Activated CD8-positive, alpha-beta T cell treated with anti-CD3 and anti-CD28 coated beads for 36 hours (primary cell): ENCODE measurements at regions of chr3 and their contacts with region 1.

Region 1: GRCh38 chr3:16884084-16884747 is 539 bp upstream of the PLCL2 start:
- DNase-seq: peak; percentile 82
- ATAC-seq: peak; percentile 62
- H3K4me3 Mint-ChIP-seq: peak overlapping the region; percentile 83
- H3K27ac Mint-ChIP-seq: peak overlapping the region; percentile 95
- H3K4me1 Mint-ChIP-seq: peaks cover 20% of the 10 kb centered on the region
- H3K27me3 Mint-ChIP-seq: no peaks in the 10 kb centered on the region
- CTCF ChIP-seq: peak; percentile 76

Region 2: GRCh38 chr3:16728781-16729745 is 155.2 kb before region 1 on chr3:
- CTCF ChIA-PET with region 1: no interaction called
- POLR2A ChIA-PET with region 1: no interaction called
- intact Hi-C with region 1: no loop called
- DNase-seq: no peak
- ATAC-seq: no peak
- H3K4me3 Mint-ChIP-seq: no peak overlapping the region
- H3K27ac Mint-ChIP-seq: no peak overlapping the region
- H3K4me1 Mint-ChIP-seq: no peaks in the 10 kb centered on the region
- H3K27me3 Mint-ChIP-seq: no peaks in the 10 kb centered on the region
- CTCF ChIP-seq: no peak

Region 3: GRCh38 chr3:16849229-16849628 is 35.0 kb before region 1 on chr3:
- CTCF ChIA-PET with region 1: interaction called, 11 read pairs
- POLR2A ChIA-PET with region 1: interaction called, 3 read pairs
- intact Hi-C with region 1: loop called (anchors 5 kb)
- DNase-seq: peak; percentile 87
- ATAC-seq: peak; percentile 85
- H3K4me3 Mint-ChIP-seq: peak overlapping the region; percentile 65
- H3K27ac Mint-ChIP-seq: peak overlapping the region; percentile 75
- H3K4me1 Mint-ChIP-seq: peaks cover 44% of the 10 kb centered on the region
- H3K27me3 Mint-ChIP-seq: no peaks in the 10 kb centered on the region
- CTCF ChIP-seq: no peak

Region 4: DNA sequence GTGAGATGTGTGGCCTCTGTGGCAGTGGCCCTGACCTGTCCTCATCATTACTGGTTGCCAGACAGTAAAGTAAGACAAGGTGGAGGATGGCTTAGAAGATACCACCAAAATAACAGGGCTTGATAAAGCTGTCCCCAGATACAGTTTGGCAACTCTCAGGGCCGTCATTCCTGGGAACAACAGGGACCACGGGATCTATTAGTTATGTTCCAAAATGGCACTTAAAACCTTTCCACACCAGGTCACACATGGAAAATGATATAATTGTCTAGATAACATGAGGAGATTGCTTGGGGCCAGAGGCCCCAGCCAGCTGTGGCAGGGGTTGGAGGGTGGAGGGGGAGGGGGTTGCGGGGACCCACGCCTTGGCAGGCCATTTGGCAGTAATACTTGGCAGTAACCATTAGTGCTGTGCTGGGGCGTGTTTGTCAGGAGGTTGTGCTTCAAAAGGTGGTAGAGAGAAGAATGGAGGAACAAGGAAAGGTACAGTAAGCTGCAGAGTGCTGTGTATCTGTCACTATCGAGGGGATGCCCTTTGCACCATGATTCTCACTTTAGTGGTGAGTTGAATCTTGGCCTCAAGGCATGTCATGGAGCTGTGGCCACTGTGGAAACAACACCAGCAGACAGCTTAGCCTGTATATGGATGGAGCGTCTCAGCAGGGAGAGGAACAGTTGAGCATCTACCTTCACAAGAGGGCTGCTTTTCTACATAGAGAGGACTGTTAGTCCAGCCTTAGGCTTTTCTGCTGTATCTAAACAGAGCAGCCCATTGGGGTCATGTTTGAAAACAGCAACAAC is 14.6 kb after region 1 on chr3:
- CTCF ChIA-PET with region 1: interaction called, 7 read pairs
- POLR2A ChIA-PET with region 1: interaction called, 14 read pairs
- intact Hi-C with region 1: no loop called
- DNase-seq: peak; percentile 34
- ATAC-seq: peak; percentile 25
- H3K4me3 Mint-ChIP-seq: no peak overlapping the region
- H3K27ac Mint-ChIP-seq: peak overlapping the region; percentile 86
- H3K4me1 Mint-ChIP-seq: peaks cover 88% of the 10 kb centered on the region
- H3K27me3 Mint-ChIP-seq: no peaks in the 10 kb centered on the region
- CTCF ChIP-seq: no peak

Region 5: GRCh38 chr3:17023006-17023664 is 138.9 kb after region 1 on chr3:
- CTCF ChIA-PET with region 1: interaction called, 32 read pairs
- POLR2A ChIA-PET with region 1: interaction called, 4 read pairs
- intact Hi-C with region 1: loop called (anchors 5 kb)
- DNase-seq: peak; percentile 81
- ATAC-seq: peak; percentile 89
- H3K4me3 Mint-ChIP-seq: peak overlapping the region; percentile 71
- H3K27ac Mint-ChIP-seq: peak overlapping the region; percentile 92
- H3K4me1 Mint-ChIP-seq: peaks cover 72% of the 10 kb centered on the region
- H3K27me3 Mint-ChIP-seq: no peaks in the 10 kb centered on the region
- CTCF ChIP-seq: no peak

Region 6: GRCh38 chr3:17233398-17233800 is 349.2 kb after region 1 on chr3:
- CTCF ChIA-PET with region 1: interaction called, 4 read pairs
- POLR2A ChIA-PET with region 1: interaction called, 5 read pairs
- intact Hi-C with region 1: loop called (anchors 5 kb)
- DNase-seq: peak; percentile 43
- ATAC-seq: peak; percentile 99
- H3K4me3 Mint-ChIP-seq: no peak overlapping the region
- H3K27ac Mint-ChIP-seq: no peak overlapping the region
- H3K4me1 Mint-ChIP-seq: peaks cover 28% of the 10 kb centered on the region
- H3K27me3 Mint-ChIP-seq: no peaks in the 10 kb centered on the region
- CTCF ChIP-seq: peak; percentile 78

Region 7: DNA sequence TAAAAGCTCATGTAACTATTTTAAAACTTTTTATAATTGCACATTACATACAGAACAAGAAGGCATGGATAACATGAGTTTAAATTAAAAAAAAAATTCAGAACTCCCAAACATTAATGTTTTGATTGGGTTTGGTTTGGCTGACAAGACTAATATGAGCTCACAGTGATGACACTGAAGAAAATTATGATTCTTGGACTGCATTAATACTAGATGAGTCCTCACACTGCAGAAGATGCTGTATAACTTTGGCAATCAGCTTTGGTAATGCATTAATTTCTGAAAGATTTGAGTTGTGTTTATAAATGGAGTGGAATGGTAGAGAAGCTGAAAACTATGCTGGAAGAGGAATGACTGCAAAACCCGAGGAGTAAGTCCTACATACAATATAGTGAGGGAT is 359.4 kb after region 1 on chr3:
- CTCF ChIA-PET with region 1: no interaction called
- POLR2A ChIA-PET with region 1: no interaction called
- intact Hi-C with region 1: no loop called
- DNase-seq: no peak
- ATAC-seq: no peak
- H3K4me3 Mint-ChIP-seq: no peak overlapping the region
- H3K27ac Mint-ChIP-seq: no peak overlapping the region
- H3K4me1 Mint-ChIP-seq: no peaks in the 10 kb centered on the region
- H3K27me3 Mint-ChIP-seq: no peaks in the 10 kb centered on the region
- CTCF ChIP-seq: no peak